HEK293T (cell line): ENCODE measurements at regions of chr10 and their contacts with region 1.

Region 1: DNA sequence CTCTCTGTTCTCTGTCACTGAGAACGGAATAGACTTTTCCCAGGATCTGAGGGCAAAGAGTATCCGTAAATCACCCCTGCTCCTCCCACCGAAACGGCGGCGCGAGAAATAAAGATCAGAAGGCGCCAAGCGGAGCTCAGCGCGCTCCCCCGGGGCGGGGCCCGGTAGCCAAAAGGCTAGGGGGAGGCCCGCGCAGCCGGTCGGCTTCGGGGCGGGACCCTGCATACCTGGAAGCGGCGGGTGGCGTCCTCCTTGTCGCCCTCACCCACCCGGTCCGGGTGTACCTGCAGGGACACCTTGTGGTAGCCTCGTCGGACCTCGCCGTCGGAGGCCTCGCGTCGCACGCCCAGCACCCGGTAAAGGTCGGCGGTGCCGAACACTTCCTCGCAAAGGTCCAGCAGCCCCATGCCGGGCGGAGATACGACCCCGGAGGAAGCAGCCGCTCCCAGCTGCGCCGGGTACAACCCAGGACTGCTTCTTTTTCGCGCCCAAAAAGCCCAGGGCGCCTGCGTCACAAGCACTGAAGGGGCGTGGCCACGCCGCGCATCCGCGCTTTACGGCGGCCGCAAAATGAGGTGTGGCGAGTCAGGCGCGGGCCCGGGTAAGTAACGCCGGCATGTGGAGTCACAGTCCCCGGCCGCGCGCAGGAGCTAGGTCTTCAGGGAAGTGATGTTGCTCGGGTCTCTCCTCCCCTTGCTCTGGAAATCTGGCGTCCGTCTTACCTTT is at the start of gene DNAJC9:
- DNase-seq: peak; percentile 91

Region 2: DNA sequence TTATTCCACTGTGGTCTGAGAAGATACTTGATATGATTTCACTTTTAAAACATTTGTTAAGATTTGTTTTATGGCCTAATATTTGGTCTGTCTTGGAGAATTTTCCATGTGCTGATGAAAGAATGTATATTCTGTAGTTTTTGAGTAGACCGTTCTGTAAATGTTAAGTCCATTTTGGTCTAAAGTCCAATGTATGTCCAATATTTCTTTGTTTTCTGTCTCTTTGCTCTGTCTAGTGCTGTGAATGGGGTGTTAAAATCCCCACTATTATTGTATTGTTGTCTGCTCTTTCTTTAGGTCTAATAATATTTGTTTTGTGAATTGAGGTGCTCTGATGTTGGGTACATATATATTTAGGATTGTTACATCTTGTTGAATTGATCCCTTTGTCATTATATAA is 31.2 kb before region 1 on chr10:
- CTCF ChIA-PET with region 1: no interaction called
- POLR2A ChIA-PET with region 1: no interaction called
- DNase-seq: no peak

Region 3: DNA sequence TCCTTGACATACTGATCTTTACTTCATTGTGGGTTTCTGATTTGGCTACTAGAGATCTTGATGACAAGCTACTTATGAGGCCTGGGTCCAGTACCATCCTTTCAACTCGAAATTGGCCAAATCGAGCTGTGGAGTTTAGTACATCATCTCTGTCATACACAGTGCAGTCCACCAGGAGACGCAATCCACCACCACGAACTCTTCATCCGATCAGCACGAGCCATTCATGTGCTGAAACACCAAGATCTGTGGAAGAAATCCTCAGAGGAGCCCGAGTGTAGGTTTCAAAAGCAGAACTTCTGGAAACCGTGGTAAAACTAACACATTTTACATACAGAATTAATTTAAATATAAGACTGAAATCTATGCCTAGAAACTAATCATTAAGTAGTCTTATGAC is 14.1 kb before region 1 on chr10:
- CTCF ChIA-PET with region 1: no interaction called
- POLR2A ChIA-PET with region 1: interaction called, 33 read pairs
- DNase-seq: peak; percentile 37

Region 4: GRCh38 chr10:73261362-73261995 is 14.5 kb after region 1 on chr10:
- CTCF ChIA-PET with region 1: interaction called, 3 read pairs
- POLR2A ChIA-PET with region 1: interaction called, 13 read pairs
- DNase-seq: no peak

Region 5: DNA sequence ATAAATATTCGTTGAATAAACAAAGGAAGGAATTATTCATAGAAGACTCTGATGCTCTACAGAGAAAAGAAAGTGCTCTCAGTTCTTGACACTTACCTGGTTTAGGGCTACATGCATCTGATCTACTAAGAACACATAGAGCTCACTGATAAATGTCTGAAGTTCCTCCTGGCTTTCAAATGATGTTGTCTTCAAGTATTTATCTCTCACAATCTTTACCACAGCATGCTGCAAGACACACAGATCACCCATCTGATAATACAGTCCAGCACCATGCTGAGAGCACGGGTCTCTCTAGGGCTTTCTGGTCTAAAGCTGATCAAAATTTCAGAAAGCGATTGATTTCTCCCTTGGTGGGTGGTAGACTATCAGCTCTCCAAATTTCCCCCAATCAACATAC is 50.0 kb after region 1 on chr10:
- CTCF ChIA-PET with region 1: no interaction called
- POLR2A ChIA-PET with region 1: no interaction called
- DNase-seq: no peak

Region 6: DNA sequence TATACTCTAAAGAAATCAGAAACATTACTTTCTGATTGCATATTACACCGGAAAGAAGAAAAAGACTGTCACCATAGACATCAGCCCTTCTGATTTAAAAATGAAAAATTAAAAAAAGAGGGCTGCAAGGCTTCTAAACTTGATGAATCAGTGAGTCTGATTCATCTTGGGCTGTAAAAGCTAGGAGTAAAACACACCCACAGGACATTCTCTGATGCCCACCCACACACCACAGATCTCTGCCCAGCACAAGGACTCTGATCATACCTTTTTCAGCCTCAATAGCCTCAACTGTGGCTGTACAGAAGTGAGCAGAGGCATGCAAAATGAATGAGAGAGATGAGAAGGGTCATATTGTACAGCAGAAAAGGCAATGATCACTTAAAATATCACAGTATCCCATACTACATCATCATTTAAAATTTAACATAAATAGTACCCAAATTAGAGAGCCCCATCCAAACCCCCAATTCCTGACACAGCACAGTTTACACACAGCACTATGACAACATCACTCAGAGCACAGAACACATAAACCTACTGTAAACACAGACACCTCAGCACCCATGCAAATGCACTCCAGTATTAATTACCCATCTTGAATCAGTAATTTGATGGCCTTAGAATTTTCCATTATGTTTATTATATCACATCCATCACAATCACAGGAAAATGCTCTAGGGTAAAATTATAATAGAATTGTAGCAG is 192.8 kb after region 1 on chr10:
- CTCF ChIA-PET with region 1: no interaction called
- POLR2A ChIA-PET with region 1: no interaction called
- DNase-seq: no peak